Mammary epithelial cell (primary cell): ENCODE measurements at regions of chr12 and their contacts with region 1.

Region 1: DNA sequence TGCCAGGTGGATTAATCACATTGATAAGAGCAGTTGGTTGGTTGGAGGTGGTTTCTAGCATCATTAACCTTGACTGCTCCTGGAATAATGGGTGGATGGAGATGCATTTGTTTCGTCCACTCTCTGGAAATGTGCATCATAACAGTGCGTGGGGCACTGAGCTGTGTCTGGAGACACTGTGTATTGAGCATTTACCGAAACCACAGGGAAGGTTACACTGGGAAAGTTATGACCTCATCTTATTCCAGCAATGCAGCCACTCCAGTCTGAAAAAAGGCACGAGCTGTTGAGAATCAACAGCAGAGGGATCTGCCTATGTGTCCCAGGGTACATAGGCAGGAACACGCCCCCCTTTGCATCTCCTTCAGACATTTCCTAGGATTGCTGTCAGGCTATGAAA is 27.2 kb downstream of the RNFT2 start:
- DNase-seq: no peak
- H3K4me3 ChIP-seq: no peak overlapping the region
- H3K27ac ChIP-seq: no peak overlapping the region
- H3K4me1 ChIP-seq: no peaks in the 10 kb centered on the region
- H3K27me3 ChIP-seq: no peaks in the 10 kb centered on the region
- CTCF ChIP-seq: no peak

Region 2: DNA sequence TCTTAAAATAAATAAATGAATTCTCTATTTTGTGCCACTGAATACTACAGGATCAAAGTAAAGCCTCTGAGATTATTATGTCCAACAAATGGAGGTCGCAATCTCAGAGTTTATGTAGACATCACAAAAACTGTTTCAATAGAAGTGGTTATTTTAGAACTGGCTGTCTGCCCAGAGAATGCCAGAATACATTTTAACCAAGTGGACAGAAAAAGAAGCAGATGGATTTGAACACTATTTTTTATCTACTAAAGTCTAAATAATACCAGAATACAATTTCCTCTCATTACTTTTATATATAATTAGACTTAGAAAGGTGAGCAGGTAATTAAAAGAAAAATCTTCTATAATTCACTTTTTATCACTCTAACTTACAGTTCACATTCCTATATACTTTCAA is 606.1 kb before region 1 on chr12:
- CTCF ChIA-PET with region 1: no interaction called
- dilution Hi-C with region 1: no loop called
- in situ Hi-C with region 1: no loop called
- intact Hi-C with region 1: no loop called
- DNase-seq: no peak
- H3K4me3 ChIP-seq: no peak overlapping the region
- H3K27ac ChIP-seq: no peak overlapping the region
- H3K4me1 ChIP-seq: peaks cover 9% of the 10 kb centered on the region
- H3K27me3 ChIP-seq: no peaks in the 10 kb centered on the region
- CTCF ChIP-seq: no peak

Region 3: GRCh38 chr12:116855744-116856470 is 90.6 kb after region 1 on chr12:
- CTCF ChIA-PET with region 1: interaction called, 3 read pairs
- dilution Hi-C with region 1: loop called (anchors 5 kb)
- in situ Hi-C with region 1: no loop called
- intact Hi-C with region 1: no loop called
- DNase-seq: no peak
- H3K4me3 ChIP-seq: no peak overlapping the region
- H3K27ac ChIP-seq: no peak overlapping the region
- H3K4me1 ChIP-seq: no peaks in the 10 kb centered on the region
- H3K27me3 ChIP-seq: peaks cover 20% of the 10 kb centered on the region
- CTCF ChIP-seq: no peak